ENCODE measurements at regions of chr1 and their contacts with region 1.

Region 1: GRCh38 chr1:119808972-119809550 is 2.2 kb downstream of the REG4 start:
- DNase-seq: peak; percentile 64 to 67
- H3K4me3 ChIP-seq: 0 out of 2 replicates have a peak overlapping the region, but pooled peaks have one; percentile 2
- H3K27ac ChIP-seq: no peak overlapping the region
- H3K4me1 ChIP-seq: no peaks in the 10 kb centered on the region
- H3K27me3 ChIP-seq: no peaks in the 10 kb centered on the region
- CTCF ChIP-seq: peak; percentile 99

Region 2: GRCh38 chr1:119686649-119687048 is 122.4 kb before region 1 on chr1:
- CTCF ChIA-PET with region 1: no interaction called
- POLR2A ChIA-PET with region 1: interaction called, 15 read pairs
- intact Hi-C with region 1: no loop called
- DNase-seq: peak; percentile 70 to 99
- H3K4me3 ChIP-seq: peak overlapping the region; percentile 17; the same call in 1 of the 2 replicates
- H3K27ac ChIP-seq: peak overlapping the region; percentile 82
- H3K4me1 ChIP-seq: peaks cover 47% of the 10 kb centered on the region
- H3K27me3 ChIP-seq: no peaks in the 10 kb centered on the region
- CTCF ChIP-seq: no peak

Region 3: DNA sequence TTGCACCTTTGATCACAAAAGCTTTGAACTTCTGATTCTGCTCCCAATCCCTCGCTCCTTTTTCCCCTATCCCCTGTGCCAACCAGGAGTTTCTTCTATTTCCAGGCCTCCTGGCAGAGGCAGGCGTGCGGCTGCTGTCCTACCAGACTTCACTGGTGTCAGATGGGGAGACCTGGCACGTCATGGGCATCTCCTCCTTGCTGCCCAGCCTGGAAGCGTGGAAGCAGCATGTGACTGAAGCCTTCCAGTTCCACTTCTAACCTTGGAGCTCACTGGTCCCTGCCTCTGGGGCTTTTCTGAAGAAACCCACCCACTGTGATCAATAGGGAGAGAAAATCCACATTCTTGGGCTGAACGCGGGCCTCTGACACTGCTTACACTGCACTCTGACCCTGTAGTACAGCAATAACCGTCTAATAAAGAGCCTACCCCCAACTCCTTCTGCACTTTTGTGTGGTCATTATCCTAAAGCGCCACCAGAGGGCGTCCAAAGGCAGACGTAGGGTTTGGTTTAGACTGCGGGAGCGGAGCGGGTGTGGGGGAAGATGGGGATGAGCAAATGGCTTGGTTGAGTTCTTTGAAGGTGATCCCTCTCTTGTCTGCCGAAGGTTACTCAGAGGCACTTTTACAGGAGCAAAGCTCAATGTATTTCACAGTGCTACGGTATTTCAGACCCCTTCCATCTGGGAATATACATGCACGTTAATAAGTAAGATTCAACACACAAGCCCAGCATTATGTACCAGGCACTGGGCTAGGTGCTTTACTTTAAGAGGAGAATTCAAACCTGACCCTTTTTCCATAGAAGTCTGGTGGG is 65.1 kb before region 1 on chr1:
- CTCF ChIA-PET with region 1: interaction called, 7 read pairs
- POLR2A ChIA-PET with region 1: no interaction called
- intact Hi-C with region 1: loop called (anchors 1 kb)
- DNase-seq: peak; percentile 55 to 58
- H3K4me3 ChIP-seq: no peak overlapping the region
- H3K27ac ChIP-seq: no peak overlapping the region
- H3K4me1 ChIP-seq: no peaks in the 10 kb centered on the region
- H3K27me3 ChIP-seq: no peaks in the 10 kb centered on the region
- CTCF ChIP-seq: peak; percentile 99

Region 4: GRCh38 chr1:119838236-119838635 is 29.2 kb after region 1 on chr1:
- CTCF ChIA-PET with region 1: no interaction called
- POLR2A ChIA-PET with region 1: no interaction called
- intact Hi-C with region 1: no loop called
- DNase-seq: no peak
- H3K4me3 ChIP-seq: no peak overlapping the region
- H3K27ac ChIP-seq: no peak overlapping the region
- H3K4me1 ChIP-seq: no peaks in the 10 kb centered on the region
- H3K27me3 ChIP-seq: no peaks in the 10 kb centered on the region
- CTCF ChIP-seq: no peak

Region 5: DNA sequence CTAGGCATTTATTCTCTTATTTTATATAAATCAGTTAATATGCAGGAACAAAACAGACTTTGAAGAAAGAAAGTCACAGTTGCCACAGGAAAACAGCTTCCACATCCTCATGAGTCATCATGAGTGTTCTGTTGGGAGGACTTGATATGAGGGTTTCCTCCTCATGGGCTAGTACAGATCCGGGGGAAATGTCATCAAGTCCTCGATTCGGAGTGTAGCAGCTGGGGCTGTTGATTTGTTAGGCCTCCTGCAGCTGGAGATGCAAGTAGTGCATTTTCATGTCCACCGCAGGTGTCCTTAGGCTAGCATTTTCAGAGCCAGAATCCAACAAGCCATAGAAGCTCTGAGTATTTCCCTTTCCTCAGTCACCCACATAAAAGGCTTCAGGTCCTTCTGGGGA is 50.6 kb after region 1 on chr1:
- CTCF ChIA-PET with region 1: no interaction called
- POLR2A ChIA-PET with region 1: no interaction called
- intact Hi-C with region 1: loop called (anchors 10 kb)
- DNase-seq: peak; percentile 14 to 86
- H3K4me3 ChIP-seq: no peak overlapping the region; the same call in 1 of the 2 replicates
- H3K27ac ChIP-seq: peak overlapping the region; percentile 56
- H3K4me1 ChIP-seq: peaks cover 16% of the 10 kb centered on the region
- H3K27me3 ChIP-seq: no peaks in the 10 kb centered on the region
- CTCF ChIP-seq: no peak